Cardiac septum (tissue), 1 donor: ENCODE measurements at regions of chr4 and their contacts with region 1.

Region 1: GRCh38 chr4:185395956-185396723 is 416 bp upstream of the LRP2BP start:
- DNase-seq: peak; percentile 98

Region 2: DNA sequence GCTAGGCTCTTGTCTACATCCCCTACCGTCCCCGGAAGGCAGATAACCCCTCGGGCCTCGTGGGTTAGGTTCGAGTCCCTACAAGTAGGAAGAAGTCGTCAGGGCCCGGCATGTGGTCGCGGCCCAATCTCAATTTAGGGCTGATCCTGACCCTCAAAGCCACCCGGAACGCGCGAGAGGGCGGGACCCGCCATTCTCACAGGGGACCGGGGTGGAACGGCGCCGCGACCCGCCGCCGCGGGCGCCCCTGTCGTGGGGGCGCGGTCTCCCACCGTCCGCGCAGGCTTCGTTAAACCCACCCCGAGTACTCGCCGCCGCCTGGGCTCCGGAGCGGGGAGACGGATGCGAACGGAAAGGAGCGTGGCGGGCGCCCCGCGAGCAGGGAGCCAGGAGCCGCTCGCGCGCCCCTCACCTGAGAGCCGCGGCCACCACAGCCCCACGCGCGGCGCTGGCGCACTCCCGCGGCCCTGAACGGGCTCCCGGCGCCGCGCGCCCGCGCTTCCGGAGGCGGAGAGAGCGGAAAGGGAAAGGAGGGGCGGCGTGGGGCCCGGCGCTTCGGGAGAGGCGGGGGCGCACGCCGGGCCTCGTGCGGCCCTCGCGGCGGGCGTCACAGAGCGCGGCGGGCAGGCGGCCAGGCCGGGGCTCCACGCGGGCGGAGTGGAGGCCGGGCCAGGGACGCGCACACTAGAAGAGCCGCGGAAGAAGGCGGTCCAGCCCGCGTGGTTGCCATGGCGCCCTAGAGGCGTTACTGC is 192.5 kb before region 1 on chr4 and contains the start of gene CFAP97:
- intact Hi-C with region 1: loop called (anchors 5 kb)
- DNase-seq: peak; percentile 95
- total RNA-seq, gene CFAP97: 14.9 TPM

Region 3: DNA sequence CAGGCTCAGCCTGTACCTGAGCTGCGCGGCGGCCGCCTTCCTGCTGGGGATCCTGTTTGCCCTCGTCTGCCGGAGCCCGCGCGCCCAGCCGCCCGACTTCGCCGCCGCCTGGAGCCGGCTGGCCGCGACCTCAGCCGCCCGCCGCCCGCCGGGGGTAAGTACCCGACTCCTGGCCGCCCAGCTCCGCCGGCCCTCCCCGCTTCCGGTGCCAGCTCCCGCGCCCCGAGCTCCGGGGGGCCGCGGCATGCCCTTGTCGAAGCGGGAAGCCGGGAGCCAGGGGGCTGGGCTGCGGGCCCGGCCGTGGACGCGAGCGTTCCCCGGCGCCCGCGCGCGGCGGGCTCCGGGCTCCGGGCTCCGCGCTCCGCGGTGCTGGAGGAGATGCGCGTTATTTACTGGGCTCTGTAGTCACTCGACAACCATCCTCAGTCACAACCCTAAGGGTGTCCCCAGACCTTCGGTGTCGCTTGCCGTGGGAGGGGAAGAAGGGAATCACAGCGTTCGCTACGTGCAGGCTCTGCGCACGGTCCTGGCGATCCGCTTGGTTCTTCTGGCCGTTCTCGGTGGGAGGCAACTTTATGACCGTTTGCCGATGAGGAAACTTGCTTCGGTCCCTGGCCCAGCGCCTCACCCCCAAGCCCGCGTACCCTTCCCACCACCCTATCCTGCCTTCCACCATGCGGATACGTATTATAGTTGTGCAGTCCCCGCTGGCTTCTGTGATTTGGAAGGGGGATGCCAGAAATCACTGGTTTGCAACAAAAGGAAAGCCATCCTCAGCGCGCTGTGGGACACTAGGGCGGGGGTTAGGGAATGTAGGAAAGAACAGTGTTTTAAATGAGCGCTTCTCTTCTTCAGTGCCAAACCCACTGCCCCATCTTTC is 185.8 kb before region 1 on chr4:
- intact Hi-C with region 1: loop called (anchors 1 kb)
- DNase-seq: peak; percentile 80

Region 4: DNA sequence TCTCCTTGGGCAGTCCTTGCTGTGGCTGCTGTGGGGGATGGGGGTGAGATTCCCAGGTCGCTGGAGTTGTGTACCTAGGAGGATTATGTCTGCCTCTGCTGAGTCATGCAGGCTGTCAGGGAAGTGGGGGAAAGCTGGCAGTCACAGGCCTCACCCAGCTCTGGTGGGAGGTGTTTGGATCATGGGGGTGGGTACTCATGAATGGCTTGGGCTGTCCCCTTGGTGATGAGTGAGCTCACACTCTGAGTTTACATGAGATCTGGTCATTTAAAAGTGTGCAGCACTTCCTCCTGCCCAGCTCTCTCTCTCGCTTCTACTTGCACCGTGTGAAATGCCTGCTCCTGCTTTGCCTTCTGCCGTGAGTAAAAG is 163.8 kb after region 1 on chr4:
- intact Hi-C with region 1: loop called (anchors 10 kb)
- DNase-seq: no peak